ENCODE measurements at regions of chr13 and their contacts with region 1.

Region 1: DNA sequence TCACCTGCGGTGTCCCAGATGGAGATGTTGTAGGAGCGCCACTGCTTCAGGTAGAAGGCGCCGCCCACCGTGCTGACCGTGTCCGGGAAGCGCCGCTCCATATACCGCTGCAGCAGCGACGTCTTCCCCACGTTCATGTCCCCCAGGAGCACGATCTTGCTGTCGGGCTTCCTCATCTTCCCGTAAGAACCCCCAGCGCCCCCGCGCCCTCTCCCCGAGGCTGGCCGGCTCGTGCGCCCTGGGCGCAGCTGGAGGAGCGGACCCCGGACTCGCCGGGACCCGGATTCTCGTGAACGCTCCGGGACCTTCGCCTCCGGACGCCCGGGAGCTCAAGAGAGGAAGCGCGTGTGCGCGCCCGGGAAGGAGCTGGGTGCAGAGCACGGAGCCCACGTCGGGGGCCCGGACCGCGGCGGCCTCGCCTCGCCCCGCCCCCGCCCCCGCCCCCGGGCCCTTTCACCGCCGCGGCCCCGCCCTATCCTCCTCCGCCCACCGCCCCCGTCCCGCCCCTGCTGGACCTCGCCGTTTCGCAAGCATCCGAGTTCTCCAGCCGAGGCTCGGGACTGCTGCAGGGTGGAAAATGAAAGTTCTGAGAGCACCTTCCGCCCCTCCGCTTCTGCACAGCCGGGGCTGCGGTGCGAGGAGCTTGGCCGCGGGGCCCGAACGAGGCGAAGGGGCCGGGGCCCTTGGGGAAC is at the start of gene RAB20:
- DNase-seq: peak; percentile 89
- ATAC-seq: peak; percentile 92 to 93
- total RNA-seq, gene RAB20: 12.7 to 24.3 TPM

Region 2: DNA sequence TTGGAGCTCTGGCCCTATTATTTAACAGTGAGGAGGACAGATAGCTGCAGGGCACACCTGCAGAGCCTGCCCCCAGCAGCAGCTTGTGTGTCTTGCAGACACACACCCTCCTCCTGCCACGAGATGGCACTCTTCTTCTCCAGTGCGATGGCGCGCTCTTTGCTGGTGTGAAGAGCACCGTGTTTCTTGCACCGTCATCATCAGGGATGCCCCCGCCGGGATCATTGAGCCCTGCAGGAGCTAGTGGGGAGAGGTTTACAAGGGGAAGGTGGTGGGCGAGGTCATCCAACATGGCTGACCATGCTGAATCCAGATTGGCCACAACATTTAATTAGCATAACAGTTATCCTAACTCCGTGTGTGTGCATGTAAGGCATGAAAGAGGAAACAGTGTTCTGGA is 105.5 kb before region 1 on chr13:
- intact Hi-C with region 1: loop called (anchors 10 kb)
- DNase-seq: peak; percentile 79
- ATAC-seq: peak; percentile 88

Region 3: GRCh38 chr13:110463871-110464510 is 97.5 kb before region 1 on chr13:
- intact Hi-C with region 1: loop called (anchors 10 kb)
- DNase-seq: no peak
- ATAC-seq: peak in 1 of 2 donors; percentile 12

Region 4: GRCh38 chr13:110520431-110521295 is 40.8 kb before region 1 on chr13:
- intact Hi-C with region 1: loop called in 1 of 2 experiments (anchors 5 kb)
- DNase-seq: peak; percentile 85
- ATAC-seq: peak; percentile 72 to 76

Measured in left cardiac atrium (tissue), 4 donors.